Caco-2 (cell line): ENCODE measurements at regions of chr2 and their contacts with region 1.

Region 1: GRCh38 chr2:216498418-216499413 is at the start of gene RPL37A:
- DNase-seq: peak; percentile 94 to 96
- H3K4me3 ChIP-seq: peak within 1 kb of the TSS; percentile 71
- H3K4me3 Mint-ChIP-seq: peak within 1 kb of the TSS; percentile 99
- H3K27ac Mint-ChIP-seq: peak within 1 kb of the TSS; percentile 97
- H3K4me1 ChIP-seq: peaks cover 15% of the 10 kb centered on the region; the same call in 1 of the 2 replicates
- H3K4me1 Mint-ChIP-seq: peaks cover 7% of the 10 kb centered on the region
- H3K27me3 ChIP-seq: no peaks in the 10 kb centered on the region
- H3K27me3 Mint-ChIP-seq: no peaks in the 10 kb centered on the region
- CTCF ChIP-seq: no peak
- total RNA-seq, gene RPL37A: 2,873 and 2,887 TPM in 2 replicates

Region 2: DNA sequence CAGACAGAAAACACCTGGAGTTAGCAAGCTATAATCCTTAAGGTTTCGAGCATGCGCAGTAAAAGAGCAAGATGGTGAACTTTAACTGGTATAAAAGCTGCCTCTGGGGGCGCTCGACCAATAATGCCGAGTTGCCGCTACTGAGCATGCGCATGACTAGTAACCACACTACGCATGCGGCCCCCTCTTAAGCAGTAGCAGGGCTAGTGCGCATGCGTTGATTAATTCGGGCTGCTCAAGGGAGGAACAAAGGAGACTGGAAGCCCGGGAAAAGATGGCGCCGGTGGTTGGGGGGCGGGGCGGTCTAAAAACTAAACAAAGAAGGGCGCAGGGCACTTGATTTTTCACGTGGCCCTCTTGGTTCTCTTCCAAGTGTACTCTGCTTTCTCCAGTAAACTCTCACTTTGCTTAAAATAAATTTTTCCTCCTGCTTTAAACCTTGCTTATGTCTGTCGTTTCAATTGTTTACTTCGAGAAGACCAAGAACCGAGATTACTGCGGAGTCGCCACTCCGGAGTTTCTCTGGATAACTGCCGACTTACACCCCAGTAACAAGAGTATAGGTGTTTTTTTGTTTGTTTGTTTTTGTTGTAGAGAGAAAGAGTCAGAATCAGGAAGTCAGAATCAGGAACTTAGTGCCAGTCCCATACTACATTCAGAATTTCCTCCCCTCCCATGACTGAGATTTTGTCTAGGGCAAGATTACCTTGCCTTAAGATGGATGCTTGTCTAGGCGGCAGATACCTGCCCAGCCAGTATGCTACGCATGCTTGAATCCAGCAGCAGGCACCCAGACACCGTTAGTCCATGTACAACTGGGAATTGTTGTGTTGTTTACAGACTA is 383.8 kb before region 1 on chr2:
- CTCF ChIA-PET with region 1: interaction called, 3 read pairs
- POLR2A ChIA-PET with region 1: interaction called, 5 read pairs
- intact Hi-C with region 1: loop called (anchors 10 kb)
- DNase-seq: peak; percentile 98 to 99
- H3K4me3 ChIP-seq: peak overlapping the region; percentile 33
- H3K4me3 Mint-ChIP-seq: peak overlapping the region; percentile 92
- H3K27ac Mint-ChIP-seq: peak overlapping the region; percentile 97
- H3K4me1 ChIP-seq: peaks cover 35% of the 10 kb centered on the region
- H3K4me1 Mint-ChIP-seq: peaks cover 33% of the 10 kb centered on the region
- H3K27me3 ChIP-seq: no peaks in the 10 kb centered on the region
- H3K27me3 Mint-ChIP-seq: no peaks in the 10 kb centered on the region
- CTCF ChIP-seq: peak; percentile 85 to 92

Region 3: DNA sequence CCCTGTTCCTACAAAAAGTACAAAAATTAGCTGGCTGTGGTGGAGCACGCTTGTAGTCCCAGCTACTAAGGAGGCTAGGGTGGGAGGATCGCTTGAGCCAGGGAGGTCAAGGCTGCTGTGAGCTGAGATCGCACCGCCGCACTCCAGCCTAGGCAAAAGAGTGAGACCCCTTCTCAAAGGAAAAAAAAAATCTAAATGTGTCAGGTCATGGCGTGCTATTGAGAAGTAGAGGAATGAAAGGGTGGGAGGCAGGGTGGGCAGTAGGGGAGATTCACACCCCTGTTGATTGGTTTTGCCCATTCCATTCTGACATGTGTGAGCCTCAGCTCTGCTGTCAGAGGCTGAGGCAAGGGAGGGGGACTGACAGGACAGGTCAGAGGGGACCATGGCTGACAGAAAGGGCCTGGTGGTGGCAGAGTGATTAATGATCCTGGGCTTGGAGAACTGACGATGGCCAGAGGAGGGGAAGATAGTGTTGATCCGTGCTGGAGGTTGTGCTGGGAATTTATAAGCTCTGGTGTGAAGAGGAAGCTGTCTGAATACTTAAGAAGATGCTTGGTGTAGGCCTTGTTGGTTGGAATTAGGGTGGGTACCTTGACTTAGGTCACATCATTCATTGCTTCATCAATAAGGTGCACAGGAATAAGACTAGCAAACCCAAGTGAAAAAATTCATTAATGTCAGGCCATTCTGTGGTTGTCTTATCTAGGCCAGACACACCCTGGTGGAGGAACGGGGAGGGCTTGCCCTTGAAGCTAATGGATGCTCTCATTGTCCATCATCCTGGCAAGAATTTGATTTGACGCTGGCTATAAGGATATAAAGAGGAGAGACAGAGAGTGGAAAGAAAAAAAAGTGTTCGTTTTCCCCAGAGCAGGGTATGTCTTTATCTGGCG is 105.5 kb before region 1 on chr2:
- CTCF ChIA-PET with region 1: interaction called, 10 read pairs
- POLR2A ChIA-PET with region 1: no interaction called
- intact Hi-C with region 1: no loop called
- DNase-seq: no peak
- H3K4me3 ChIP-seq: no peak overlapping the region
- H3K4me3 Mint-ChIP-seq: no peak overlapping the region
- H3K27ac Mint-ChIP-seq: no peak overlapping the region
- H3K4me1 ChIP-seq: no peaks in the 10 kb centered on the region
- H3K4me1 Mint-ChIP-seq: no peaks in the 10 kb centered on the region
- H3K27me3 ChIP-seq: no peaks in the 10 kb centered on the region; the same call in 1 of the 2 replicates
- H3K27me3 Mint-ChIP-seq: peaks cover 25% of the 10 kb centered on the region
- CTCF ChIP-seq: no peak

Region 4: DNA sequence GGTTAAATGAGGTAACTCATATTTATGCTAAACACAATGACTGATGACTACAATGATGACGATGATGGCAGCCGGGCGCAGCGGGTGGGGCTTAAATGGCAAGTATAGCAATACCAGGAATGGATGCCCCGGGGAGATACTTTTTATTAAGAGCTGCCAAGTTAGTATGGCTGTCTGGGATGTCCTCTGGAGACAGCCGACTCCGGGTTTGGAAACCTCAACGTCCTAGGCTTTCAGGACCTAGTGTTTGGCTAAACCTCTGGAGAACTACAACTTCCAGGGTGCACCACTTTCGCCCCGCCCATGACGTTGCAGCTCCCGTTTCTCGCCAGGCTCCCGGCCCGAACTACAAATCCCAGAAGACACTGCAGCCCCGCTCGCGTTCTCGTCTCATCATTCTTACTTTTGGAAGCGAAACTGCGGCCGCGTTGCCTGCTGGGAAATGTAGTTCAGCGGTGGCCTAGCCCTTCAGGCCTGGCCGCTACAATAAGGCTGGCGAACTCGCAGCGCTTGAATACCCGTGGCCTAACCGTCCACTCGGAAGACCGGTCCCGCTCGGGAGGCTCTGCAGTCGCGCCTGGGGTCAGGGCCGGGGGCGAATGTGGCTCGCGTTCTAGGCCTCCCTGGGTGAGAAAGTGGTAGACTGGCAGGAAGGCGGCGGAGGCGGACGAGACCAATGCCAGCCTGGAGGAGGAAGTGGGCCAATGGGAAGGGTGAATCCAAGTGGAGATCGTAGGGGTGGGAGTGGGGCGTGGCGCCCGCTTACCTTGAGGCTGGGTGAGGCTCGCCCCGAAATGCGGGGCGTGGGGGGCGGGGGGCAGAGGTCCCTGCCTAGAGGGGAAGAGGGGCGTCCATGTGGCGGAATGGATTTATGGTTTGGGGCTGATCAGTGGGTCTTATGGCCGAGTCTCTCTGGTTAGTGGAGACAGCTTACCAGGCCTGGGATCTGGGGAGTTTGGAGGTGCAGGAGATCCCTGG is 86.4 kb before region 1 on chr2 and contains the start of gene SMARCAL1:
- CTCF ChIA-PET with region 1: no interaction called
- POLR2A ChIA-PET with region 1: interaction called, 13 read pairs
- intact Hi-C with region 1: loop called (anchors 2 kb)
- DNase-seq: peak; percentile 98
- H3K4me3 ChIP-seq: peak within 1 kb of the TSS; percentile 96
- H3K4me3 Mint-ChIP-seq: peak within 1 kb of the TSS; percentile 99
- H3K27ac Mint-ChIP-seq: peak within 1 kb of the TSS; percentile 96
- H3K4me1 ChIP-seq: 0 out of 2 replicates have a peak, but pooled peaks cover 4% of the 10 kb centered on the region
- H3K4me1 Mint-ChIP-seq: no peaks in the 10 kb centered on the region
- H3K27me3 ChIP-seq: no peaks in the 10 kb centered on the region
- H3K27me3 Mint-ChIP-seq: peaks cover 3% of the 10 kb centered on the region
- CTCF ChIP-seq: no peak
- total RNA-seq, gene SMARCAL1: 24.1 and 26.0 TPM in 2 replicates

Region 5: DNA sequence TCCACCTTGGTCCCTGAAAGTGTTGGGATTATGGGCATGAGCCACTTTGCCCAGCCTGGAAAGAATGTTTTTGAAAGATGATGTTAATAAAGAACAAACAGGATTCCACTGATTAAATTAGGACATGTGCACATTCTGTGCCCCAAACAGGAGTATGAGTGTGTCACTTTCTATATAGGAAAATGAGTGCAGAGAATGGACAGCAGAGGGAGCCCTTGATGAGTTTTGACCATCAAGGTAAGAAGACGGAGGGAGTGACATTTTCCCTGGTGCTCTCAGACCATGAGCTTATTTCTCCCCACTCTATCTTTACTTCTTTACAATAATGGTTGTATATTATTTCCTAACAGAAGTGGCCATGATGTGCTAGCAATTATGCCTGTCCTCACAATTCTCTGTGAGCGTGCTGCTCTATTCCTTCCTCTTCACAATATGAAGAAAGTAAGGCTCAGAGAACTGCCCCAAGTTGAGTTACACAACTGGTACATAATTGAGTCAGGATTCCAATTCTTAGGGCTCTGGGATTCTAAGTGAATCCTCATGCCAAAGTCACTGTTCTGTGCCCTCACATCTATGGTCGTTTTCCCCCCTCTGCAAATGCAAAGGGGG is 20.5 kb after region 1 on chr2:
- CTCF ChIA-PET with region 1: no interaction called
- POLR2A ChIA-PET with region 1: no interaction called
- intact Hi-C with region 1: no loop called
- DNase-seq: peak; percentile 68 to 73
- H3K4me3 ChIP-seq: no peak overlapping the region
- H3K4me3 Mint-ChIP-seq: no peak overlapping the region
- H3K27ac Mint-ChIP-seq: no peak overlapping the region
- H3K4me1 ChIP-seq: no peaks in the 10 kb centered on the region
- H3K4me1 Mint-ChIP-seq: no peaks in the 10 kb centered on the region
- H3K27me3 ChIP-seq: no peaks in the 10 kb centered on the region
- H3K27me3 Mint-ChIP-seq: no peaks in the 10 kb centered on the region
- CTCF ChIP-seq: peak; percentile 71 to 72